Gastrocnemius medialis (tissue), 4 donors: ENCODE measurements at regions of chr7 and their contacts with region 1.

Region 1: DNA sequence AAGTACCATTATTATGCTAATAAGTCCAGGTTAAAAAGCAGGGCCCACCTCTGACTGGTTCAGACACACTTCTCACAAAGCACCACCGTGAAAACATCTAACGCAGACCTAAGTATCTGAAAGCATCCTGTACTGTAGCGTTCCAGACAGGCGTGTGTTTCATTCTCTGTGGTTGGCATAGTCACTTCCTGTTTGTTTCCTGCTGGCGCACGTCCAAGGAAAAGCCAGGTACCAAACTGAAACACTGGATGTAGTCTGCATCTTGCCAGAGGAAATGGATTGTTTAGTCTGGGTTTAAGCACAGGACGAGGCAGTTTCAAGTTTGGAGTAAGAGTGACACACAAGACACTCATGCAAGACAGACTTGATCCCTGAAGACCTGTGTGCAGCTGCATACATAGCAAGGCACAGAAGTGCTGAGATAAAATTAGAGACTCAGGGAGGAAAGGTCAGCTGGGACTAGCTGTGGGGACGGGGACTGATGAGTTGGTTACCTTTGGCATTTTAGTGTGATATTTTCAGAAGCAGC is 23.3 kb downstream of the BPGM start:
- DNase-seq: peak in 1 of 2 donors; percentile 27
- ATAC-seq: peak; percentile 72 to 77
- H3K4me3 ChIP-seq: peak overlapping the region in 1 of 4 donors; percentile 15
- H3K27ac ChIP-seq: peak overlapping the region in 3 of 4 donors; percentile 0 to 42 (median 4)
- H3K4me1 ChIP-seq: peaks cover 20 to 21% of the 10 kb centered on the region in 2 donors
- H3K27me3 ChIP-seq: no peaks in the 10 kb centered on the region
- CTCF ChIP-seq: no peak
- POLR2A ChIP-seq: no peak

Region 2: DNA sequence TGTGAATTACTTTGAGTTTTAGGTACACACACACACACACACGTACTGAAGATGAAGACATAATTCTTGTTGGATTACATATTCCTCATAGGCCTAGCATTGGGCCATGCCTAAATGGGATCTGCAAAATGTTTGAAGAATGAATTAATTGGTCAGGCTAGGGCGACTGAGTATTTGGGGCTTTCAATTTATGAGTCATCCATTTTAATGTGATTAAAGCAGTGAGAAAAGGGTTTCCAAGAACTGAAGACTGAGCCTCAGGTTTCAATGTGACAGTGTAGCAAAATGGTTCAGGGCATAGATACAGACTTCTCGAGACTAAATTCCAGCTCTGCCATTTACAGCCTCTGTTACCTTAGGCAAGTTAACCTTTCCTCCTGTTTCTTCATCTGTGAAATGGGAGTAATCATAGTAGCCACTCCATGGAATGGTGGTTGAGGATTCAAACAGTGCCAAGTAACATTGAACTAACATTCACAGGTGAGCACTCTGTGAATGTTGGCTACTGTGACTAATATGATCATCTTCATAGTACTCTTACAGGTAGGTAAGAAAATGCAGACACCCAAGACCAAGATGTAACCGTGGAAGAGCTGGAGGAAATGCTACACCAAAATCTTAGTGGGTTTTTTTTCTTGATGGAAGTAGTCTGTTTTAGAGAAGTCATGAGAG is 15.7 kb before region 1 on chr7:
- in situ Hi-C with region 1: no loop called
- intact Hi-C with region 1: no loop called
- DNase-seq: no peak
- ATAC-seq: no peak
- H3K4me3 ChIP-seq: no peak overlapping the region
- H3K27ac ChIP-seq: no peak overlapping the region
- H3K4me1 ChIP-seq: peaks cover 0 to 3% of the 10 kb centered on the region in 2 donors
- H3K27me3 ChIP-seq: no peaks in the 10 kb centered on the region
- CTCF ChIP-seq: no peak
- POLR2A ChIP-seq: no peak

Region 3: GRCh38 chr7:134750083-134751062 is 80.5 kb after region 1 on chr7:
- in situ Hi-C with region 1: no loop called
- intact Hi-C with region 1: no loop called
- DNase-seq: peak in 1 of 2 donors; percentile 15
- ATAC-seq: no peak
- H3K4me3 ChIP-seq: no peak overlapping the region
- H3K27ac ChIP-seq: no peak overlapping the region
- H3K4me1 ChIP-seq: no peaks in the 10 kb centered on the region
- H3K27me3 ChIP-seq: no peaks in the 10 kb centered on the region
- CTCF ChIP-seq: peak; percentile 12 to 58 (median 38)
- POLR2A ChIP-seq: no peak

Region 4: DNA sequence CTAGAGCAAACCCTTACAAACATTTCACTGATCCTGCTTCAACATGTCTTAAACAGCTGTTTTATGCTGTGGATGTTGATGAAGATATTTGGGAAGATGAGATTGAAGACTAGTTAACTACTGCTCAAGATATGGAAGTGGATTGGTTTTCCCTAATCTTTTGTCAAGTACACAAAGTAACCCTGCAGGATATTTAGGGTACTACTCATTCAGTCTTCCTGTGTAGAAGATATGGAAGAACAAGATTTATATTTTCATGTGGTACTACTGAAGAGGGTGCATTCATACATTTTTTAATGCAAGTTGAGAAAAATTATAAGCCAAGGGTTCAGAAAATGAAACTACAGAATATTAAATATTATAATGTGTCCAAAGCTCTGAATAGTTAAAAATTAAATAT is 459.7 kb after region 1 on chr7:
- in situ Hi-C with region 1: no loop called
- intact Hi-C with region 1: no loop called
- DNase-seq: no peak
- ATAC-seq: no peak
- H3K4me3 ChIP-seq: no peak overlapping the region
- H3K27ac ChIP-seq: no peak overlapping the region
- H3K4me1 ChIP-seq: no peaks in the 10 kb centered on the region
- H3K27me3 ChIP-seq: no peaks in the 10 kb centered on the region
- CTCF ChIP-seq: no peak
- POLR2A ChIP-seq: no peak

Region 5: DNA sequence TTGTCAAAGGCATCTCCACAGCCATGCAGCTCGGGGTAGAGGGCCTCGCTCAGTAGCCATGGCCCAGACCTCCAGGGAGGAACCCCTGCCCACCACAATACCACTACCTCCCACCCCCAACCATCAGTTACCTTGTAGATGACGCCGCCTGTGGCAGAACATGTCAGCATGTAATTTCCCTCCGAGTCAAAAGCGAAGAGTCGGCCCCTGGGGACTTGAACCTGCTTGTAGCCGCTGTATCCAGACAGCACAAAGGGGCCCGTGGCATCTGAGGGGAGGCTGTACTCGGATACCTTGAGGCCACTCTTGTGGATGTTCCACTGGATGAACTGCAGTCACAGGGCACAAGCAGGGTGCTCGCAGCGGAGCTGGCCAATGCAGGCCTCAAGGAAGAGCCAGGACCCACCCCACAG is 516.9 kb after region 1 on chr7:
- in situ Hi-C with region 1: loop called in 1 of 4 experiments (anchors 25 kb)
- intact Hi-C with region 1: no loop called
- DNase-seq: no peak
- ATAC-seq: no peak
- H3K4me3 ChIP-seq: no peak overlapping the region
- H3K27ac ChIP-seq: no peak overlapping the region
- H3K4me1 ChIP-seq: peaks cover 0 to 5% of the 10 kb centered on the region in 2 donors
- H3K27me3 ChIP-seq: no peaks in the 10 kb centered on the region
- CTCF ChIP-seq: no peak
- POLR2A ChIP-seq: no peak